Naive thymus-derived CD4-positive, alpha-beta T cell (primary cell): ENCODE measurements at regions of chrX and their contacts with region 1.

Region 1: DNA sequence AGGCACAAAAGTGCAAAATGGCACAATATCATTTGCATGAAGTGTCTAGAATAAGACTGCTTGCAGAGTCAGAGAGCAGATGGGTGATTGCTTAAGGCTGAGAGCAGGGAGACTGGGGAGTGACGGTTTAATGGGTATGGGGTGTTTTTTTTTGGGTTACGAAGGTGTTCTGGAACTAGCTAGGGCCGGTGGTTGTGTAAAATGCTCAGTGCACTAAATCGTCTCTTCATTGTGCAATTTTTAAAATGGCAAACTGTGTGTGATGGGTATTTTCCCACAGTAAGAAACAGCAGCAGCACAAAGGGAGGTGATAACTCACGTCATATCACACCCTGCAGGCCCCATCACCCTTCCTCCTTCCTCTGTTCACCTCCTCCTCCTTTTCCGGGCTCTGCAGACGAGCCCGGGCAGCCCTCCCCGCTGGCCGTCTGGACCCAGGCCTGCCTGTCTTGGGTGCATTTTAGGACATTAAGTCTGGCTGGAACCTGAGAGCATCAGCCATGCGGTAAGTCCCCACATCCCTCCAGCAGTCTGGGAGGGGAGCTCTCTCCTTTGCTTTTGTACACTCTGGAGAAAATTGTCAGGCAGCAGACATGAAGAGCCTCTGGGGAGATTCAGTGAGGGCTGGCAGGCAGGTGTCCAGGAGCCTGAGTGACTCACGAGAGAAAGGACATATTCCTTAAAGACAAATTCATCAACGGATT is 42.7 kb downstream of the ASMT start:
- DNase-seq: peak in 8 of 9 donors; percentile 18 to 73 (median 60)
- ATAC-seq: peak; percentile 69
- H3K4me3 ChIP-seq: peak overlapping the region; percentile 69
- H3K4me3 Mint-ChIP-seq: peak overlapping the region; percentile 77 to 99 (median 92)
- H3K27ac ChIP-seq: peak overlapping the region; percentile 80
- H3K27ac Mint-ChIP-seq: peak overlapping the region; percentile 90 to 99 (median 94)
- H3K4me1 ChIP-seq: peaks cover 21 to 24% of the 10 kb centered on the region in 2 donors
- H3K4me1 Mint-ChIP-seq: peaks cover 17 to 40% (median 36%) of the 10 kb centered on the region in 7 donors
- H3K27me3 ChIP-seq: no peaks in the 10 kb centered on the region
- H3K27me3 Mint-ChIP-seq: no peaks in the 10 kb centered on the region

Region 2: GRCh38 chrX:386768-387575 is 1270.5 kb before region 1 on chrX and contains the start of gene PPP2R3B:
- CTCF ChIA-PET with region 1: no interaction called
- POLR2A ChIA-PET with region 1: no interaction called
- intact Hi-C with region 1: loop called (anchors 1 to 5 kb)
- DNase-seq: peak; percentile 98 to 100 (median 99)
- ATAC-seq: peak; percentile 93
- H3K4me3 ChIP-seq: peak within 1 kb of the TSS; percentile 99
- H3K4me3 Mint-ChIP-seq: peak within 1 kb of the TSS; percentile 84 to 96 (median 93)
- H3K27ac ChIP-seq: peak within 1 kb of the TSS; percentile 100
- H3K27ac Mint-ChIP-seq: peak within 1 kb of the TSS; percentile 96 to 99 (median 99)
- H3K4me1 ChIP-seq: peaks cover 4 to 5% of the 10 kb centered on the region in 2 donors
- H3K4me1 Mint-ChIP-seq: peaks cover 0 to 20% (median 9%) of the 10 kb centered on the region in 7 donors
- H3K27me3 ChIP-seq: no peaks in the 10 kb centered on the region
- H3K27me3 Mint-ChIP-seq: peaks cover 0 to 5% (median 0%) of the 10 kb centered on the region in 5 donors
- total RNA-seq, gene PPP2R3B: 24.9 to 53.5 (median 32.5) TPM

Region 3: DNA sequence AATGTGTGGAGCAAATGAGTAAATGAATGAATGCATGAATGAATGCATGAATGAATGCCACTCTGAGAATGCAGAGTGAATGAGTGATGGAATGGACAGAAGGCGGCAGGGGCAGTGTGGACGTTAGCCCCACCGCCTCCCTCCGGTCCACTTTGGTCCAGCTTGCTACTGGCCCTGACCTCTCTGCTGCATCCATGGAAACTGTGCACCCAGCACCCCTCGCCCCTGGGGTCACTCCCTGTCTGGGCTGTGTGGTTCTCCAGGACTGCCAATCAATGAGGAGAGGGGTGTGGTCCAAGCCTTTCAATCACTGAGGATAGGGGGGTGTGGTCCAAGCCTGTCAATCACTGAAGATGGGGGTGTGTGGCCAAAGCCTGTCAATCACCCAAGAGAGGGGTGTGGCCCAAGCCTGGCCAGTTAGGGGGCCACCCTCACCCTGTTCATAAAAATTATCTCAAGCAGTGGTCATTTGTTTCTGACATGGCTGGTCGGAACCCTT is 165.6 kb before region 1 on chrX:
- CTCF ChIA-PET with region 1: no interaction called
- POLR2A ChIA-PET with region 1: no interaction called
- intact Hi-C with region 1: no loop called
- DNase-seq: peak in 8 of 9 donors; percentile 46 to 73 (median 54)
- ATAC-seq: peak; percentile 82
- H3K4me3 ChIP-seq: no peak overlapping the region
- H3K4me3 Mint-ChIP-seq: peak overlapping the region in 1 of 10 donors; percentile 30
- H3K27ac ChIP-seq: no peak overlapping the region
- H3K27ac Mint-ChIP-seq: peak overlapping the region in 8 of 9 donors; percentile 72 to 90 (median 84)
- H3K4me1 ChIP-seq: no peaks in the 10 kb centered on the region
- H3K4me1 Mint-ChIP-seq: peaks cover 20 to 56% (median 34%) of the 10 kb centered on the region in 7 donors
- H3K27me3 ChIP-seq: no peaks in the 10 kb centered on the region
- H3K27me3 Mint-ChIP-seq: peaks cover 0 to 2% (median 0%) of the 10 kb centered on the region in 5 donors

Region 4: GRCh38 chrX:1591102-1591900 is 66.2 kb before region 1 on chrX and contains the start of gene AKAP17A:
- CTCF ChIA-PET with region 1: no interaction called
- POLR2A ChIA-PET with region 1: no interaction called
- intact Hi-C with region 1: loop called (anchors 1 kb)
- DNase-seq: peak; percentile 92 to 100 (median 99)
- ATAC-seq: peak; percentile 95
- H3K4me3 ChIP-seq: peak within 1 kb of the TSS; percentile 76
- H3K4me3 Mint-ChIP-seq: peak within 1 kb of the TSS; percentile 85 to 97 (median 91)
- H3K27ac ChIP-seq: peak within 1 kb of the TSS; percentile 91
- H3K27ac Mint-ChIP-seq: peak within 1 kb of the TSS; percentile 82 to 94 (median 91)
- H3K4me1 ChIP-seq: peaks cover 7 to 10% of the 10 kb centered on the region in 2 donors
- H3K4me1 Mint-ChIP-seq: peaks cover 5 to 50% (median 34%) of the 10 kb centered on the region in 7 donors
- H3K27me3 ChIP-seq: no peaks in the 10 kb centered on the region
- H3K27me3 Mint-ChIP-seq: no peaks in the 10 kb centered on the region
- total RNA-seq, gene AKAP17A: 75.7 to 165 (median 125) TPM

Region 5: GRCh38 chrX:1629244-1629643 is 28.3 kb before region 1 on chrX:
- CTCF ChIA-PET with region 1: no interaction called
- POLR2A ChIA-PET with region 1: no interaction called
- intact Hi-C with region 1: no loop called
- DNase-seq: no peak
- ATAC-seq: no peak
- H3K4me3 ChIP-seq: no peak overlapping the region
- H3K4me3 Mint-ChIP-seq: no peak overlapping the region
- H3K27ac ChIP-seq: no peak overlapping the region
- H3K27ac Mint-ChIP-seq: peak overlapping the region in 1 of 9 donors; percentile 51
- H3K4me1 ChIP-seq: no peaks in the 10 kb centered on the region
- H3K4me1 Mint-ChIP-seq: peaks cover 0 to 10% (median 0%) of the 10 kb centered on the region in 7 donors
- H3K27me3 ChIP-seq: no peaks in the 10 kb centered on the region
- H3K27me3 Mint-ChIP-seq: peaks cover 0 to 3% (median 0%) of the 10 kb centered on the region in 5 donors

Region 6: GRCh38 chrX:1679238-1679637 is 21.7 kb after region 1 on chrX:
- CTCF ChIA-PET with region 1: no interaction called
- POLR2A ChIA-PET with region 1: no interaction called
- intact Hi-C with region 1: loop called in 1 of 2 experiments (anchors 1 kb)
- DNase-seq: peak in 1 of 9 donors; percentile 30
- ATAC-seq: peak; percentile 29
- H3K4me3 ChIP-seq: no peak overlapping the region
- H3K4me3 Mint-ChIP-seq: peak overlapping the region in 1 of 10 donors; percentile 17
- H3K27ac ChIP-seq: no peak overlapping the region
- H3K27ac Mint-ChIP-seq: peak overlapping the region in 4 of 9 donors; percentile 1 to 73 (median 67)
- H3K4me1 ChIP-seq: no peaks in the 10 kb centered on the region
- H3K4me1 Mint-ChIP-seq: peaks cover 11 to 47% (median 26%) of the 10 kb centered on the region in 7 donors
- H3K27me3 ChIP-seq: no peaks in the 10 kb centered on the region
- H3K27me3 Mint-ChIP-seq: no peaks in the 10 kb centered on the region

Region 7: GRCh38 chrX:2595258-2595657 is 937.7 kb after region 1 on chrX:
- CTCF ChIA-PET with region 1: no interaction called
- POLR2A ChIA-PET with region 1: no interaction called
- intact Hi-C with region 1: loop called (anchors 1 to 2 kb)
- DNase-seq: no peak
- ATAC-seq: no peak
- H3K4me3 ChIP-seq: no peak overlapping the region
- H3K4me3 Mint-ChIP-seq: no peak overlapping the region
- H3K27ac ChIP-seq: no peak overlapping the region
- H3K27ac Mint-ChIP-seq: peak overlapping the region in 4 of 9 donors; percentile 3 to 59 (median 23)
- H3K4me1 ChIP-seq: no peaks in the 10 kb centered on the region
- H3K4me1 Mint-ChIP-seq: peaks cover 0 to 20% (median 12%) of the 10 kb centered on the region in 7 donors
- H3K27me3 ChIP-seq: no peaks in the 10 kb centered on the region
- H3K27me3 Mint-ChIP-seq: no peaks in the 10 kb centered on the region

Region 8: DNA sequence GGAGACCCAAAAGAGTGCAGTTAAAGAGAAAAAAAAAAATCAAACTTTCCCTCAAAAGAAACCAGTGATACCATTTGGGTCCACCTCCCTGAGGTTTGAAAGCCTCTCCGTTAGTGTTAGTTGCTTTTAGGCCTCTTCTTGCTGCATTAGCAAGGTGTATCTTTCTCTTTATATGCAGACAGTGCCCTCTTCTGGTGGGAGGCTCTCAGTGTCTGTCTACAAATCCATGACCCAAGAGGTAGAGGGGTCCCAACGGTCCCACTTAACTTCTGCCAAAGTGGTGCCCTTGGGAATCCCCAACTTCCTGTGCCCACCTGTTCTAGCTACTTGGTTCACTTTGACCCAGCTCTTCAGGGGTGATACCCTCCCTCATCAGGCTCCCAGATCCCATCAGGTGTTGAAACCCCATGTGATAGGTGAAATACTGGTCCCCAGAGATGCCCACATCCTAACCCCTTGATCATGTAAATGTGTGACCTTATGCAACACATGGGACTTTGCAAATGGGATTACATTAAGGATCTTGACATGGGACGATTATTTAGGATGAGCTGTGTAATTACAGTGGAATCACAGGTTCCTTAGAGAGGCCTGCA is 969.9 kb after region 1 on chrX:
- CTCF ChIA-PET with region 1: no interaction called
- POLR2A ChIA-PET with region 1: no interaction called
- intact Hi-C with region 1: loop called (anchors 1 kb)
- DNase-seq: peak in 7 of 9 donors; percentile 34 to 49 (median 40)
- ATAC-seq: peak; percentile 61
- H3K4me3 ChIP-seq: no peak overlapping the region
- H3K4me3 Mint-ChIP-seq: peak overlapping the region in 3 of 10 donors; percentile 19 to 33 (median 20)
- H3K27ac ChIP-seq: no peak overlapping the region
- H3K27ac Mint-ChIP-seq: peak overlapping the region in 6 of 9 donors; percentile 28 to 100 (median 56)
- H3K4me1 ChIP-seq: peaks cover 16% of the 10 kb centered on the region in 2 donors
- H3K4me1 Mint-ChIP-seq: peaks cover 23 to 53% (median 51%) of the 10 kb centered on the region in 7 donors
- H3K27me3 ChIP-seq: no peaks in the 10 kb centered on the region
- H3K27me3 Mint-ChIP-seq: no peaks in the 10 kb centered on the region

Region 9: GRCh38 chrX:2819345-2820135 is 1162.0 kb after region 1 on chrX:
- CTCF ChIA-PET with region 1: no interaction called
- POLR2A ChIA-PET with region 1: no interaction called
- intact Hi-C with region 1: loop called in 1 of 2 experiments (anchors 10 kb)
- DNase-seq: peak in 1 of 9 donors; percentile 14
- ATAC-seq: no peak
- H3K4me3 ChIP-seq: no peak overlapping the region
- H3K4me3 Mint-ChIP-seq: no peak overlapping the region
- H3K27ac ChIP-seq: no peak overlapping the region
- H3K27ac Mint-ChIP-seq: no peak overlapping the region
- H3K4me1 ChIP-seq: no peaks in the 10 kb centered on the region
- H3K4me1 Mint-ChIP-seq: peaks cover 0 to 9% (median 6%) of the 10 kb centered on the region in 7 donors
- H3K27me3 ChIP-seq: no peaks in the 10 kb centered on the region
- H3K27me3 Mint-ChIP-seq: peaks cover 0 to 6% (median 3%) of the 10 kb centered on the region in 5 donors